ENCODE measurements at regions of chr16 and their contacts with region 1.

Region 1: GRCh38 chr16:88442727-88443576 is 10.1 kb upstream of the ZFPM1 start:
- DNase-seq: peak; percentile 71 to 96 (median 89)
- ATAC-seq: peak; percentile 90 to 95 (median 94)
- H3K4me3 ChIP-seq: no peak overlapping the region
- H3K27ac ChIP-seq: no peak overlapping the region
- H3K4me1 ChIP-seq: no peaks in the 10 kb centered on the region
- H3K27me3 ChIP-seq: no peaks in the 10 kb centered on the region
- CTCF ChIP-seq: peak; percentile 86 to 95 (median 94)

Region 2: GRCh38 chr16:88527186-88527936 is 84.4 kb after region 1 on chr16:
- intact Hi-C with region 1: loop called in 2 of 3 experiments (anchors 5 kb)
- DNase-seq: peak in 4 of 6 donors; percentile 73 to 87 (median 80)
- ATAC-seq: peak; percentile 60 to 79 (median 74)
- H3K4me3 ChIP-seq: no peak overlapping the region
- H3K27ac ChIP-seq: no peak overlapping the region
- H3K4me1 ChIP-seq: peaks cover 0 to 3% (median 0%) of the 10 kb centered on the region in 3 donors
- H3K27me3 ChIP-seq: no peaks in the 10 kb centered on the region
- CTCF ChIP-seq: peak; percentile 59 to 83 (median 77)

Region 3: DNA sequence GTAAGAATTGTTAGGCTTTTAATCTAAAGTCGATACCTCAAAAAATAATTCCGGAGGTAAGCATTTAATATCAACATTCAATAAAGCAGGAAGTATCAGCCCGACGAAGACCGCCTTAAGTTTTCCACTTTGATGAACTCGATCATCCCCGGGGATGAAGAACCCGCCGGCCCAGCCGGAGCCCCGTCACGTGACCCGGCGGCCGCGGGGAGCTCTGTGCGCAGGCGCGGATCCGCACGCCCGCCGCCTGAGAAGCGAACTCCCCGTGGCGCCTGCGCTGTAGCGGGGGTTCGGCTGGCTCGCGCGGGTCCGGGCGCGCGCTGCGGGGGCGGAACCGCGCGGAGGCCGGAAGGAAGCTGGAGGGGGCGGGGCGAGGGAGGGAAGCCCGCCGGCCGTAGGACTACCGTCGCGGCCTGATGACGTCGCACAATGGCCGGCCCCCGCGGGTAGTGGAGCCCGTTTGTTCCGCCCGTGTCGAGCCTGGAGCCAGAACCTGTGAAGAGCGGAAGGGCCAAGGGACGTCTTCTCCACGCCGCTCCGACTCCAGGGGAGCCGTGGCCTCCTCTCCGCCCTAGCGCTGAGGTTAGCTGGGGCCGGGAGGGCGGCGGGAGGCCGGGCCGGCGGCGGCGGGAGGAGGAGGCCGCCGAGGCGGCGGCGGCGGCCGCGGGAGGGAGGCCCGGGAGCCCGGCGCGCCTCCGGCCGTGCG is 127.2 kb after region 1 on chr16 and contains the start of gene ZC3H18:
- intact Hi-C with region 1: loop called in 1 of 3 experiments (anchors 10 kb)
- DNase-seq: peak; percentile 94 to 100 (median 98)
- ATAC-seq: peak; percentile 98 to 100 (median 99)
- H3K4me3 ChIP-seq: peak within 1 kb of the TSS; percentile 72 to 94 (median 87)
- H3K27ac ChIP-seq: peak within 1 kb of the TSS in 3 of 4 donors; percentile 58 to 62 (median 62)
- H3K4me1 ChIP-seq: peaks cover 12 to 19% (median 13%) of the 10 kb centered on the region in 3 donors
- H3K27me3 ChIP-seq: no peaks in the 10 kb centered on the region
- CTCF ChIP-seq: no peak
- total RNA-seq, gene ZC3H18: 12.2 to 19.6 (median 16.6) TPM

Measured in pancreas (tissue), 10 donors.